ENCODE measurements at regions of chr2 and their contacts with region 1.

Region 1: GRCh38 chr2:43169987-43170386 is 56.4 kb downstream of the ZFP36L2 start:
- DNase-seq: peak; percentile 76
- ATAC-seq: peak; percentile 19
- H3K4me3 Mint-ChIP-seq: peak overlapping the region; percentile 85
- H3K27ac Mint-ChIP-seq: peak overlapping the region; percentile 98
- H3K4me1 Mint-ChIP-seq: peaks cover 63% of the 10 kb centered on the region
- H3K27me3 Mint-ChIP-seq: peaks cover 2% of the 10 kb centered on the region

Region 2: GRCh38 chr2:43142921-43143438 is 27.0 kb before region 1 on chr2:
- POLR2A ChIA-PET with region 1: interaction called, 94 read pairs
- DNase-seq: peak; percentile 58
- ATAC-seq: peak; percentile 76
- H3K4me3 Mint-ChIP-seq: peak overlapping the region; percentile 85
- H3K27ac Mint-ChIP-seq: peak overlapping the region; percentile 85
- H3K4me1 Mint-ChIP-seq: peaks cover 50% of the 10 kb centered on the region
- H3K27me3 Mint-ChIP-seq: no peaks in the 10 kb centered on the region

Region 3: GRCh38 chr2:43158259-43158880 is 11.6 kb before region 1 on chr2:
- POLR2A ChIA-PET with region 1: interaction called, 40 read pairs
- DNase-seq: peak; percentile 69
- ATAC-seq: peak; percentile 67
- H3K4me3 Mint-ChIP-seq: peak overlapping the region; percentile 71
- H3K27ac Mint-ChIP-seq: peak overlapping the region; percentile 95
- H3K4me1 Mint-ChIP-seq: peaks cover 44% of the 10 kb centered on the region
- H3K27me3 Mint-ChIP-seq: no peaks in the 10 kb centered on the region

Region 4: DNA sequence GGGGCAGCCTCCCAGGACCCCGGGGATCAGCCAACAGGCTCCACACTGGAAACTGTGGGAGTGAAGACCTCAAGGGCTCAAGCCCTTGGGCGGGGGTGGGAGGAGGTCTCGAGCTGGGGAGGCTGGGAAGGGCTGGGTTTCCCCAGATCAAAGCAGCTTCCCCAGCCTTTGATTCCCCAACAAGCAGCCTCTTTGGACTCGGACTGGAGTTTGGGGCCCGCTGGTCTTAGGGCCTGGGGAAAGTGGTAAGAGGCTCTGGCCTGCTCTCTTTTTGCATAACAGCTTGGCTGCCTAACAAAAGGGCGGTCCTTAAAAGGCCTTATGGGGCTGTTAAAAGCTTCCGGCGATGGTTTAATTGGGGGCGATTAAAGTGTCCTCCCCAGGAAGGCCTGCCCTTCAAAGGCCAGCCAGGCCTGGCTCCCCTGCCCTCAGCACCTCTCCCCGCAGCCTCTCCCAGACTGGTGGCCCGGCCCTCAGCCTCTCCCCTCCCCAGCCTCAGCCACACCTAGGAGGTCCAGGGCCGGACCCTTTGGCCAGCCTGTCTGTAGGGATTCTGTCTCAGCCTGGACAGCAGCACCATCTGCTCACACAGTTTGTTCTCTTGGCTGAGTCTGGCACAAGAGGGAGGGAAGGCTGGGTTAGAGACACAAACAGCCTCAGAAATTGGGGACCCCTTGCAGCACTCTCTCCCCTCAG is 16.8 kb after region 1 on chr2:
- POLR2A ChIA-PET with region 1: interaction called, 53 read pairs
- DNase-seq: no peak
- ATAC-seq: no peak
- H3K4me3 Mint-ChIP-seq: no peak overlapping the region
- H3K27ac Mint-ChIP-seq: peak overlapping the region; percentile 28
- H3K4me1 Mint-ChIP-seq: peaks cover 27% of the 10 kb centered on the region
- H3K27me3 Mint-ChIP-seq: no peaks in the 10 kb centered on the region

Region 5: DNA sequence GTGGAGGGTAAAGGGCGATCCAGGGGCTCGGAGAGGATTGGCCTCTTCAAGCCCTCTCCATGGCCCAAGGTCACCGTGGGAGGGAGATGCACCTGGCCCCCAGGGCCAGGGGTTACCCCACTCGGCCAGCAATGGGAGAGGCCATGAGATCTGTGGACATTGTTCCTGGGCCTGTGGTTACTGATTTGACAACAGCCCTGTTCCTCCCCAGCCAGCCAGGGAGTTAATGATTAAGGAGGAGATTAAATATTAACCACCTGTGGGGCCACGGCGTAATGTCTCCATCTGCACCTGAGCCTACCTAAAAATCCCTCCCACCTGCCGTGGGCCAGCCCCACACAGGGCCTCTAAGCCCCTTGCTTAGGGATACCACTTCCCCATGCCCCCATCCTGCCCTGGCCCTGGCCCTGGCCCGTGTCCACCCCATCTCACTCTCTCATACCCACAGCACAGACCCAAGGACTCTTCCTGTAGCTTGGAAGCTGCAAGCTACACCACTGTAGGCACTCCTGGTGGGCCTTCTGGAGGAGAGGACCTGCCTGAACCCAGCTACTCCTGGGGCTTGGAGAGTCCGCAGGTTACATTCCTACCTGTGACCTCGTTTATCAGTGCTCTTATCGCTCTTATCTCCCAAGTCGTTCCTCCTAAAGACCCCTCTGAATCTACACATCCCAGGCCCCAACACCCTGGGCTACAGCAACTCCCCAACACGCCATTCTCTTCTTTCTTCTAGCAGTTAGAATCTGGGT is 24.3 kb after region 1 on chr2:
- POLR2A ChIA-PET with region 1: interaction called, 53 read pairs
- DNase-seq: peak; percentile 53
- ATAC-seq: peak; percentile 12
- H3K4me3 Mint-ChIP-seq: peak overlapping the region; percentile 81
- H3K27ac Mint-ChIP-seq: peak overlapping the region; percentile 94
- H3K4me1 Mint-ChIP-seq: peaks cover 57% of the 10 kb centered on the region
- H3K27me3 Mint-ChIP-seq: no peaks in the 10 kb centered on the region